MCF 10A (cell line): ENCODE measurements at regions of chr4 and their contacts with region 1.

Region 1: DNA sequence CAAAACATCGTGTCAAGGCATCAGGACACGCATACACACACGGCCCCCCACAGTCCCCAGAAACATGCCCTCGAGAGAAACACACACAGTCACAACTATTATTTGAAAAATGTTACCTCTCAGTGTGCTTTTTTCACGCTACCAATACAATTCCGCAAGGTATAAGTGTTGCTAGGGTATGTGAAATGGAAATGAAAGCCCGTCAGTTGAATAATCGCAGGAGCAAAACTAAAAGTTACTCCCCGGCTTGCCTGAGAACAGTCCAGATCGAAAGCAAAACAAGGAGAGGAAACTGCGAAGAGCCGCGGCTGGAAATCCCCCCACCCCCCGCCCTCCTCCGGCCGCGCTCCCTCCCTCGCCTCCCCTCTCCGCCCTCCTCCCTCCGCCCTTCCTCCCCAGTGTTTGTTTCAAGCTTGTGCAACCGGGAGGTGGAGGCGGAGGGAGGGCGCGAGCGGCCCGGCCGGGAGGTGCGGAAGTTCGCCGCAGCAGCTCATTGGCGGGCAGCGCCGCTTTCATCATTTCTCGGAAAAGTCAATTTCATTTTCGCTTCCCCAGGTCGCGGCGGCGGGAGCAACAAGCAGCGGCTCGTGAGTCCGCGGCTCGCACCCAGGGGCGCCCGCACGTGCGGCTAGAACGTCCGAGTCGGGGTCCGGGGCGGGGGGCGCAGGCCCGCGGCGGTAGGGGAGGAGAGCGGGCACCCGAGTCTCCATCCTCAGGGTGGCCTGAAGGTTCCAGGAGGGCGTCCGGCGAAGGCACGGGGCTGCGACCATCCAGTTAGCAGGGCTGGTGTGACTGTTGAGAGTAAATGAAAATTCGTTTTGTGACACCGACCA is at the start of gene IRF2:
- DNase-seq: peak; percentile 98
- H3K4me3 Mint-ChIP-seq: peak within 1 kb of the TSS; percentile 99
- H3K27ac Mint-ChIP-seq: peak within 1 kb of the TSS; percentile 98
- H3K4me1 Mint-ChIP-seq: peaks cover 23% of the 10 kb centered on the region
- H3K27me3 Mint-ChIP-seq: no peaks in the 10 kb centered on the region
- CTCF ChIP-seq: no peak
- total RNA-seq, gene IRF2: 20.8 and 29.0 TPM in 2 replicates

Region 2: DNA sequence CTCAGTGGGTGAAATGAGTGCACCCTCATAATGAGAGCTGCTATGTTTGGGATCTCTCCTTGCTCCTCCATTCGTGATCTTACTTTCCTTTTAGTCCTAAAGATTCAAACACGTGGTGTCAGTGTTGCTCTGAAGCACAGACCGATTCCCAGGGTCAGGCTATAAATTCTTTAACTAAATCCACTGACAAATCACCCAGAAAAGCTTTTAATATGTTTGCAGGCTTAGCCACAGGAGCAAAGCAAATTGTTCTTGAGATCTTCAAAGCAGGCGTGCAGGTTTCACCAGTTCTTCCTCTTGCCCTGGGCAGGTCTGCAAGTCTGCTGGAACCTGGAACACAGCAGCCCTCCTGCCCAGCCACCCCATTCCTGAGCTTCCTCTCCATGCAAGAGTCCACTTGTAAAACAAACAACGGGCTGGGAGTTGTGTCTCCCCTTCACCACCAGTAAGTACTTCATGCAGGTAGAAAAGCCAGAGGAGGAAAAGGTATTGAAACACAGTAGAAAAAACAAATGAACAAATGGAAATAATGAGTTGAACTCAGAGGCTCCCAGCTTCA is 186.7 kb before region 1 on chr4:
- CTCF ChIA-PET with region 1: interaction called, 3 read pairs
- POLR2A ChIA-PET with region 1: interaction called, 4 read pairs
- intact Hi-C with region 1: loop called (anchors 5 kb)
- DNase-seq: peak; percentile 43
- H3K4me3 Mint-ChIP-seq: no peak overlapping the region
- H3K27ac Mint-ChIP-seq: no peak overlapping the region
- H3K4me1 Mint-ChIP-seq: no peaks in the 10 kb centered on the region
- H3K27me3 Mint-ChIP-seq: no peaks in the 10 kb centered on the region
- CTCF ChIP-seq: no peak

Region 3: GRCh38 chr4:184400375-184400870 is 74.1 kb before region 1 on chr4:
- CTCF ChIA-PET with region 1: no interaction called
- POLR2A ChIA-PET with region 1: interaction called, 4 read pairs
- intact Hi-C with region 1: loop called (anchors 1 kb)
- DNase-seq: peak; percentile 95
- H3K4me3 Mint-ChIP-seq: peak overlapping the region; percentile 50
- H3K27ac Mint-ChIP-seq: peak overlapping the region; percentile 88
- H3K4me1 Mint-ChIP-seq: peaks cover 31% of the 10 kb centered on the region
- H3K27me3 Mint-ChIP-seq: no peaks in the 10 kb centered on the region
- CTCF ChIP-seq: no peak

Region 4: DNA sequence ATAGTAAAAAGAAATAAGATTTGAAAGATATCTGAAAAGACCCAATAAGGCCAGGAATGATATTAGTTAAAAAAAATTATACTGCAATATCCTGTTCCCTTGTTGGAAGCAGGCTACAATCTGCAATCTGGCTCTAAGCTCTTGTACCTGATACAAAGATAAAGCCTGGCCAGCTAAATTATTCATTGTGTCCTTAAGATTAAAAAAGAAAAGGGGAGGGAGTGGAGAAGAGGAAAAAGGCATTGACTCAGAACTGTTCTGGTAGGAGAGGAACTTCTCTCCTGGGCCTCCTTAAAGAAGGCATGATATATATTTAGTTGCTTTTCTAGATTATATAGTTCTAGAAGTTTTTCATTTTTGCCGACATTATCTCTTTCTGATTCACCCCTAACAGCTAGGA is 46.8 kb before region 1 on chr4:
- CTCF ChIA-PET with region 1: no interaction called
- POLR2A ChIA-PET with region 1: no interaction called
- intact Hi-C with region 1: no loop called
- DNase-seq: no peak
- H3K4me3 Mint-ChIP-seq: no peak overlapping the region
- H3K27ac Mint-ChIP-seq: no peak overlapping the region
- H3K4me1 Mint-ChIP-seq: no peaks in the 10 kb centered on the region
- H3K27me3 Mint-ChIP-seq: no peaks in the 10 kb centered on the region
- CTCF ChIP-seq: no peak

Region 5: DNA sequence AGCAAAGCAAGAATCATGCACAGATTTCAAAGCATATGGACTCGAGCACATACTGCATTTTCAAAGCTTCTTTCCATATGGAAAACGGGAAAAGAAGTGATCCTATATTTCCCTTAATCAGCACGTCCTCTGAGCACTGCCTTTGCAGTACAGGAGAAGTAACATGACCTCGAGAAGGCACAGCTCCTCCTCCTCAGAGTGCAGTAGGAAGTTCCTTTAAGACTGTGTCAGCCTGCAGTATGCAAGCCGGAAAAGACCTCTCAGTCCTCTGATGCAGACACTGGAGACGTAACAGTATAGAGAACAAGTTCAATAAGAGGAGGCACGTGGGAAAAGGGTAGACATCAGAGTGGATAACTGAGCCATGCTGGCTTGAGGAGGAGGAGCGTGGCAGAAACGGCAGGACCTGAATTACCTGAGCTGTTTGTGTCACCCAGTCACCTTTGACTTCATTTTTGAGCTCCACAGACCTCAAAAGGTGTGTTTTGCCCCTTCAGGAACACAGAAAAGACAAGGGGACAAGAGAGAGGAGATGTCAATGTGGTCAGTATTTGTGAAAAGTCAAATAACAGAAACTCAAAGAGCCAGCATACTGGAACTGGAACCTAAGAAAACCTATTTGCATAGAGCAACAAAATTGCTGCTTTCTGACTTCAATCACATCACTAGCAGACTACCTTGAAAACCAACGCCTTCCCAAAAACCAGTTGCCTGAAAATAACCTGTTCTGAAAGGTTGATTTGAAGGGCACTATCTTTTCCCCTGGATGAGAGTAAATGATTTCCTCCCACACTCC is 20.9 kb before region 1 on chr4:
- CTCF ChIA-PET with region 1: interaction called, 3 read pairs
- POLR2A ChIA-PET with region 1: interaction called, 10 read pairs
- intact Hi-C with region 1: no loop called
- DNase-seq: peak; percentile 67
- H3K4me3 Mint-ChIP-seq: peak overlapping the region; percentile 54
- H3K27ac Mint-ChIP-seq: peak overlapping the region; percentile 70
- H3K4me1 Mint-ChIP-seq: peaks cover 30% of the 10 kb centered on the region
- H3K27me3 Mint-ChIP-seq: no peaks in the 10 kb centered on the region
- CTCF ChIP-seq: no peak

Region 6: DNA sequence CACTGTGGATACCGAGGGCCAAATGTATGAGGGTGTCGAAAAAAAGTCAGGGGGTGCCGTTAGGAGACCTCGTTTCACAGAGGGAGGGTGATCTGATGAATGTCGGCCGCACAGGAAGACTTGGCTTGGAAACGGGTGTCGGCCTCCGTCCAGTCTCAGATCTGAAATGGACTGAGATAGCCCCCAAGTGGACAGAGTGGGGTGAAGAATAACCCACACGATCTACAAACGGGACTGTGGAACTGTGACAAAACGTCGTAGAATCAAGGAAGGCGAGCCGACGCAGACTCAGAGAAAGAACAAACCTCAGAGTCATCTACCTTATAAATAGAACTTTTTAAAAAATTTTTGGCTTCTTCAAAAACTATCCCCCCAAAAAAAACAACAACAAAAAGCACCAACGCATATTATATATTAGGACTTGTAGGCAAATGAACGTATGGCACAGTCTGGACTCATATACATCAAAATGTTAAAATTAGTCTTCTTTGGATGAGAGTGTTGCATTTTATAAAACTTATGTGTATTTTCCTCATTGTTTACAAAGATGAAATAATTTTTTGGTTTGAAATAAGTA is 63.6 kb after region 1 on chr4:
- CTCF ChIA-PET with region 1: no interaction called
- POLR2A ChIA-PET with region 1: interaction called, 108 read pairs
- intact Hi-C with region 1: loop called (anchors 1 kb)
- DNase-seq: peak; percentile 94
- H3K4me3 Mint-ChIP-seq: peak overlapping the region; percentile 93
- H3K27ac Mint-ChIP-seq: peak overlapping the region; percentile 99
- H3K4me1 Mint-ChIP-seq: peaks cover 18% of the 10 kb centered on the region
- H3K27me3 Mint-ChIP-seq: no peaks in the 10 kb centered on the region
- CTCF ChIP-seq: peak; percentile 66

Region 7: DNA sequence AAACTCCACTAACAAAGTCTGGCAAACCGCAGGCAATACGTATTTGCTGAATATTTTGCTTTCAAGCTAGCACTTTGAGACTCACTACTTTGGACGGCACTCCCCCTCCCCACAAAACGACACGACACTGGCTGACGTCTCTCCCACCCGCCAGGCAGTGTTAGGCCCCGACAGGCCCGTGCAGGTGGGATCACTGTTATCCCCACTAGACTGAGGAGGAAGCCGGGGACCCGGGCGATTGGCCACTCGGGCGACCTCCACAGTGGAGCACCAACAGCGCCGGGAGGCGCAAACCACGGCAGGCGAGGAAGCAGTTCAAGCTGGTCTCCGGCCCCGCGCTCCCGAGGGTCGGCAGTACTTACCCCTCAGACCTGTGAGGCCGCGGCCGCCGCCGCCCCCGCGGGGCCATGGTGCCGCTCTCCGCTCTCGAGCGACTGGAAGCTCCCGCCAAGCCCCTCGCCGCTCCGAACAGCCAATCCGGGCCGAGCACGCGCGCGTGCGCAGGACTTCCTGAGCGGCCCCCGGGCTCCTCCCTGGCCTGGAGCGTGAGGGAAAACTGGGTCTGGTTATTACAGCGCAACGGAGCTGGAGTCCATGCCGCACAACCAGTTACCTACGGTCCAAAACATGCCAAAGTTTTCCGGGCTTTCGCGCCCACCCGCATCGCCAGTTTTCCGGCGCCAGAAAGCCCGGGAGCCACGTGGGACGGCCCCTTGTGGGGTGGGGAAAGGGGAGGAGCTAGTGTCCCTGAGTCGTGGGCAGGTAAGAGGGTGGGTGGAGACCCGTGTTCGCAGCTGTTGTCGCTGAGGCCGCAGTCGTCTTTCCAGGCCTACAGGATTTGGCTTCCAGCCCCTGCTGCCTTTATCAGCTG is 259.4 kb after region 1 on chr4 and contains the start of gene CENPU:
- CTCF ChIA-PET with region 1: no interaction called
- POLR2A ChIA-PET with region 1: no interaction called
- intact Hi-C with region 1: loop called (anchors 5 kb)
- DNase-seq: peak; percentile 98
- H3K4me3 Mint-ChIP-seq: peak within 1 kb of the TSS; percentile 87
- H3K27ac Mint-ChIP-seq: peak within 1 kb of the TSS; percentile 73
- H3K4me1 Mint-ChIP-seq: peaks cover 26% of the 10 kb centered on the region
- H3K27me3 Mint-ChIP-seq: no peaks in the 10 kb centered on the region
- CTCF ChIP-seq: no peak
- total RNA-seq, gene CENPU: 8.3 and 22.3 TPM in 2 replicates

Region 8: DNA sequence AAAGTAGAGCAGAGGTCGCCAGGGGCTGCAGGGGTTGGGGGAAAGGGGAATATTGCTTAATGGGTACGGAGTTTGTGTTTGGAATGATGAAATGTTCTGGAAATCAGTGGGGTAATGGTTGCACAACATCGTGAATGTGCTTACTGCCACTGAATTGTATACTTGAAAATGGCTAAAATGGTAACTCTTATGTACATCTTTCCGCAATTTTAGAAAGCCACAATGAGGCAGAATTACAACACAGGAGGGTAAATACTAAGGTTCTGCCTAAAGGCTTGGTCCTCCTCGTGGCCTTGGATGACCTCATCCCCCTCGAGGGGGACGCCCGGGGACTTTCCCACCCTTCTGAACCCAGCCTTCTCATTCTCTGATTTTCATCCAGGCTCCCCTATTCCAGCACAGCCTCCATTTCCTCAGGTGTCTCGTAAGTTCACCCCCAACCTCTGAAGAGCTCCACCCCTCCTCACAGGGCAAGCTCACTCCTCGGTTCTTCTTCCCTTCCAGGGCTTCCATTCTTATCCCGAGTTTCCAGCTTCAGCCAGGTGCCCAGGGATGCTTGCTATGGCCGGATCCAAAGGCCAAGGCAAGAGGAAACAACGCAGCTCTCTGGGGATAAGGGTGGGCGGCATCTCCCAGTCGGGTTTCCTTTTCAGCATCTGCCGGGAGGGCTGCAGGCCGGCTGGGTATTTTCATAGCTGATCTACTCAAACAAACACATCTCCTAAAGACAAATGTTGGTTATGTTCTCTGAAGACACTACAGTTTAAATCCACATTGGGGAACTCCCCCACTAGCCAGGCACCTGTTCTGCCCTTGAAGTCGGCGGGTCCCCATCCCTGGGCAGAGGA is 422.6 kb after region 1 on chr4:
- CTCF ChIA-PET with region 1: no interaction called
- POLR2A ChIA-PET with region 1: no interaction called
- intact Hi-C with region 1: no loop called
- DNase-seq: peak; percentile 86
- H3K4me3 Mint-ChIP-seq: no peak overlapping the region
- H3K27ac Mint-ChIP-seq: peak overlapping the region; percentile 82
- H3K4me1 Mint-ChIP-seq: peaks cover 45% of the 10 kb centered on the region
- H3K27me3 Mint-ChIP-seq: no peaks in the 10 kb centered on the region
- CTCF ChIP-seq: no peak